ENCODE measurements at regions of chr14 and their contacts with region 1.

Region 1: DNA sequence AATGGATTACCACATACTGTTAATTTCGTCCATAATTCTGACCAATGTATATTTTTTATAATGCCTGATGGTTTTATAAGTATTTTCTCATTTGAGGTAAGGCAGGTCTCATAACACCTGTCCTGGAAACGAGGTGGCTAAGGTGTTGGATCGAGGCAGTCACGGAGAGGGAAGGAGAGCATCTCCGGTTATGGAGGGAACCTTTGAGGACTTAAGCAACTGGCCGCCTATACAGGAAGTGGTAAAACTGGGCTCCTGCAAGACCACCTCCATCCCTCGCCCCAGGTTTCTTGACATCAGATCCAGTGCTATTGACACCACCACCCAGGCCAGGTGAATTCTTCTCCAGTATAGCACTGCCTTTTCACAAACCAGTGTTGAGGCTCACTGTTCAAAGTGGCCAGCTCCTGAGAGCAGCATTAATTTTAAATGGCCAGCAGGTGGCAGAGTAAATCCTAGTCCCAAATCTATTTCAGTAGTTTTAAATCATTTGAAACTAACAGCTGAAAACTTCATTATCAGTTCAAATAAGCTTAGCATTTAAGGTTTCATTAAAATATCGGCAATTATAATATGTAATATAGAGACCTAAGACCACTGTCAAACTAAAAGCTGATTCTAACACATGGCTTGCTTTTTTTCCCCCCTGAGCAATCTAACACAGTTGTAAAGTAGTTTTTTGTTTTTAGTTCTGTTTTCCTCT is 100.8 kb downstream of the PPM1A start:
- DNase-seq: peak; percentile 50 to 75 (median 64)
- H3K4me3 ChIP-seq: no peak overlapping the region
- H3K27ac ChIP-seq: no peak overlapping the region
- H3K4me1 ChIP-seq: no peaks in the 10 kb centered on the region
- H3K27me3 ChIP-seq: peaks cover 0 to 7% (median 1%) of the 10 kb centered on the region in 5 experiments

Region 2: GRCh38 chr14:60495946-60496345 is 146.1 kb after region 1 on chr14:
- CTCF ChIA-PET with region 1: no interaction called
- POLR2A ChIA-PET with region 1: no interaction called
- DNase-seq: no peak
- H3K4me3 ChIP-seq: no peak overlapping the region
- H3K27ac ChIP-seq: no peak overlapping the region
- H3K4me1 ChIP-seq: no peaks in the 10 kb centered on the region
- H3K27me3 ChIP-seq: peaks cover 5 to 66% (median 25%) of the 10 kb centered on the region in 5 experiments

Region 3: DNA sequence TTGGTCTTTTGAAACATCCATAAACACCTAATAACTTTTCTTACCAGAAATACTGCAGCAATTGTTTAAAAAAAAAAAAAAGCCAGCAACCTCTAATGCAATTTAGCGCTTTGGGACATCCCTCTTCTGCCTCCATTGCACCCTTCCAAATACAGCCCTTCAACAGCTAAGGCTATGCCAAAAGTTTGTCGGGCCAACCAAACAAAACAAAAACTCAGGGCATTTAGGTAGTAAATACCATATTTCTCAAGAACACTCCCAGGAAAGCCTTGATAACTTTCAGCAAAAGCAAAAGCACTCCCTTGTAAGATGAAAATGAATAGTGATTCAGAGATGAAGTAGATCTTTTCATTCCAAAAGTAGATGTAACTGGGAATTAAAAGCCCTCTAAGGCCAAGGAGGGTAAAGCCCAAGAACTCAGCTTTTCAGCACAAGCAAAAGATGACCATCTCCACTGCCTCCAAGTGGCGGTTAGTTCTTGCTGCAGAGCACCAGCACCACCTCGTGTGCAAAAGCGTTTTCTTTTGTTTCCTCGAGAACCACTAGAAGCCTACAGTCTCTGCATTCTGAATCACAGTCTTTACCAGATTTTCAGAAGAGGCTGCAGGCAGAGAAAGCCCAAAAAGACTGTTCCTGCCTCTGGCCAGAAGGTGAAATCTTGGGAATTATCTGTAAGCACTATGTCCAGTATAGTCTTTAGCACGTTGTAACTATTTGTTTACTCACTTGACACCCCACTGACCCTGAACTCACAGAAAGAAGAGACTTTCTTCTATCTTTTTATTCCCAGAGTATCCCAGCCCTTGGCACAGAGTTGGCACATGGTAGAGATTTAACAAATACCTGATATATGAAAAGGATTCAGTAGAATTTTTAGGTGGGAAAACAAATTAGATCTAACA is 212.3 kb after region 1 on chr14:
- CTCF ChIA-PET with region 1: interaction called, 12 read pairs
- POLR2A ChIA-PET with region 1: no interaction called
- DNase-seq: peak; percentile 64 to 81 (median 80)
- H3K4me3 ChIP-seq: no peak overlapping the region
- H3K27ac ChIP-seq: no peak overlapping the region
- H3K4me1 ChIP-seq: no peaks in the 10 kb centered on the region
- H3K27me3 ChIP-seq: peaks cover 0 to 8% (median 0%) of the 10 kb centered on the region in 5 experiments